Common myeloid progenitor, CD34-positive (primary cell): ENCODE measurements at regions of chr5 and their contacts with region 1.

Region 1: GRCh38 chr5:671459-672328 is 21.5 kb downstream of the TPPP start:
- DNase-seq: peak; percentile 68 to 78 (median 77)
- H3K4me3 ChIP-seq: peak overlapping the region in 1 of 7 experiments; percentile 37
- H3K27ac ChIP-seq: peak overlapping the region; percentile 70 to 88
- H3K4me1 ChIP-seq: peaks cover 0 to 32% (median 24%) of the 10 kb centered on the region in 4 experiments
- H3K27me3 ChIP-seq: peaks cover 0 to 53% (median 5%) of the 10 kb centered on the region in 5 experiments

Region 2: GRCh38 chr5:553887-554286 is 117.8 kb before region 1 on chr5:
- CTCF ChIA-PET with region 1: no interaction called
- POLR2A ChIA-PET with region 1: no interaction called
- DNase-seq: no peak
- H3K4me3 ChIP-seq: no peak overlapping the region
- H3K27ac ChIP-seq: no peak overlapping the region
- H3K4me1 ChIP-seq: no peaks in the 10 kb centered on the region
- H3K27me3 ChIP-seq: peaks cover 0 to 20% (median 0%) of the 10 kb centered on the region in 5 experiments

Region 3: DNA sequence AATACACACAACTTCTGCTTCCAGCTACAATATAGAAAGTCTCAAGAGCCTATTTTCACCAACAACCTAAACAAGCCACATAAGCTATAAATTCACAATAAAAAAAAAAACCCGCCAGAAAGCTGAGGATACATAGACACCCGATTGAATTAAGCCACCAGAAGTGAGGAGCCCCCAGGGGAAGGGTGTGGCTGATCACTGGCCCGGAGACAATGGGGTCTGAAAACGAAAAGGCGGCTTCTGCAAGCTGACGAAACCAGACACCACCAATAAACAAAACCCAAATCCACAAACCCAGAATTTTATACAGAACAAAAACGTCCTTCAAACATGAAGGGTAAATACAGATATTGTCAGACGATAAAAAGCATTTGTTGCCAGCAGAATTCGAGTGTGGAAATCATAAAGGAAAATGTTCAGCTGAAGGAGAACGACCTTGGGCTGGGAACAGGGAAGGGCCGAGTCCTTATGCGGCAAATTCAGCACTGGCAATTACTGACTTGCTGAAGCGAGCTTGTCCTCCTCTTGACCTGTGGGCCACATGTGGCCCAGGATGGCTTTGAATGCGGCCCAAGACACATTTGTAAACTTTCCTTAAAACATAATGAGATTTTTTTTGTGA is 99.2 kb before region 1 on chr5:
- CTCF ChIA-PET with region 1: no interaction called
- POLR2A ChIA-PET with region 1: no interaction called
- DNase-seq: no peak
- H3K4me3 ChIP-seq: no peak overlapping the region
- H3K27ac ChIP-seq: no peak overlapping the region
- H3K4me1 ChIP-seq: no peaks in the 10 kb centered on the region
- H3K27me3 ChIP-seq: peaks cover 2 to 69% (median 22%) of the 10 kb centered on the region in 5 experiments

Region 4: DNA sequence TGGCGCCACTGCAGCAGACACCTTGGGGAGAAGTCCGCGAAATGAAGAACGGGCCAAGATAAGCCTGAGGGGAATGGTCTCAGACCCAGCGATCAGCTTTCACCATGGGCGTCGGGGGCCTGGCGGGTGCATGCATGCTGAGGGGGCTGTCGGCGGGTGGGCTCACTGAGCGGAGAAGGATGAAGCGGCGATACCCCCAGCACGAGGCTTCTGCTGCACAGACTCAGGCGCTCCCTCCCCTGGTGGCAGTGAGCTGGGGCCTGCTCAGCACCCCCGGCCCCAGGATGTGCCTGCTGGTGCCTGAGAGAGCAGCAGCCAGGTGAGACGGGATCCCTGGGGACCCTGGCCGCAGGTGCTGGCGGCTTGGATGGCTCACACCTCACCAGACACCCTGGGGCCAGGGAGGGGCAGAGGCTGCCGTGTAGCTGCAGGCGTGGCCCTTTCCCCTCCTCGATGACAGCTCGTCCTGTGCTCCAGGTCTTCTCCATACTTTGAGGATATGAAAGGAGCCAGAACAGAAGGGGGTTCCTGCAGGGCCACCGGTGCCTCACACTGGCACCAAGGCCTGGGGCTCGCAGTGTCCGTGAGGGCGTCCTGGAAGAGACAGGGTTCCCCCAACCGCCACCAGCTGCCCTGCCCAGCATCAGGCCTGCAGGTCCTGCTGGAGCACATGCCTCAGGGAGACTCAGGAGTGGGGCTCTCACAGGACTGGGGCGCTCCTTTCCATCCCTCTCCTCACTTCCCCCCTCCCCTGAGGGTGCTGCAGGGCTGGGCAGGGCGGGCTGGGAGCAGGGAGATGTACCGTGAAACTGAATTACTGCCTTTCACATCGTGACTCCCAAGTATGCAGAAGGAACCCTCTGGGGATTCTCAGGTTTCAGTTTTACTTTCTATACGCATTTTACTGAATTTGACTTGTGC is 28.1 kb before region 1 on chr5:
- CTCF ChIA-PET with region 1: no interaction called
- POLR2A ChIA-PET with region 1: no interaction called
- DNase-seq: no peak
- H3K4me3 ChIP-seq: no peak overlapping the region
- H3K27ac ChIP-seq: no peak overlapping the region
- H3K4me1 ChIP-seq: no peaks in the 10 kb centered on the region
- H3K27me3 ChIP-seq: no peaks in the 10 kb centered on the region

Region 5: GRCh38 chr5:657570-657969 is 14.1 kb before region 1 on chr5:
- CTCF ChIA-PET with region 1: interaction called, 13 read pairs
- POLR2A ChIA-PET with region 1: no interaction called
- DNase-seq: no peak
- H3K4me3 ChIP-seq: no peak overlapping the region
- H3K27ac ChIP-seq: no peak overlapping the region
- H3K4me1 ChIP-seq: no peaks in the 10 kb centered on the region
- H3K27me3 ChIP-seq: no peaks in the 10 kb centered on the region

Region 6: DNA sequence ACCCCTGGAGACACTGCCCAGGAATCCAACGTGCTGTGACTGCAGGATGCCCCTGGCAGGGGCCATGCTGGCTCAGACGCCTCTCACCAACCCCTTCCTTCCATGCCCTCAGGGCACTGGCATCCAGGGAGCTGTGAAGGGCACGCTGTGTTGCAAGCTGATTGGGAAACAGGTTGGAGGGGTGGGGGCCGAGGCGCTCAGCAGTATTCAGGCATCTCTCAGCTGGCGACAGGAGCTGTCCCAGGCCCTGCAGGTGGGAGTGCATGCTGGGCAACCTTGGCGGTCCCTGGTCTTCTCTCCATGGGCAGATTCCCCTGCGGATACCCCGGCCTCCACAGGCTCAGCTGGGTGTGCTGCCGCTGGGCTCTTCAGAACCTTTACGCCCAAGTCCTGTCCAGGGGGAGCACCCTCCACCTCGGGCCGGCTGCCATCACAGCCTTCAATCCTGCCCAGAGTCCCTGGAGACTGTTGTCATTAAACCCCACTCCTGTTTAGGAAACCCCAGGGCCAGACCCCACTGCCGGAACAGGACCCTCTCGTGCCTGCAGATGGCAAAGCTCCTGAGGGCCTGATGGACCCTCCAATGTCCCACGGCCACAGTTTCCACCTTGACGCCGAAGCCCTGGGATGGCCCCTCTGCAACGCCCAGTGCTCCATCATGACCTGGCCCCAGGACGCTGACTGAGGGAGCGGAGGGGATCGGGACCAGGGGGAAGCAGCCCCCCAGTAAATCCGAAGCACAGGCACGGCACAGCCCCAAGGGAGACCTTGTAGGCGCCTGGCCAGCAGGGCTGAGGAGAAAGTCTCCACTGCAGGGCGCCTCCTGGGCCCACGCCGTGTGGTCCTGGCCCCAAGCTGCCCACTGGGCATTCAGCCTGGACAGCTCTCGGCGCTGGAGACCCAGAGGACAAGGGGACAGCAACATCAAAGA is 12.1 kb after region 1 on chr5:
- CTCF ChIA-PET with region 1: no interaction called
- POLR2A ChIA-PET with region 1: no interaction called
- DNase-seq: no peak
- H3K4me3 ChIP-seq: no peak overlapping the region
- H3K27ac ChIP-seq: no peak overlapping the region
- H3K4me1 ChIP-seq: no peaks in the 10 kb centered on the region
- H3K27me3 ChIP-seq: peaks cover 0 to 14% (median 0%) of the 10 kb centered on the region in 5 experiments

Region 7: DNA sequence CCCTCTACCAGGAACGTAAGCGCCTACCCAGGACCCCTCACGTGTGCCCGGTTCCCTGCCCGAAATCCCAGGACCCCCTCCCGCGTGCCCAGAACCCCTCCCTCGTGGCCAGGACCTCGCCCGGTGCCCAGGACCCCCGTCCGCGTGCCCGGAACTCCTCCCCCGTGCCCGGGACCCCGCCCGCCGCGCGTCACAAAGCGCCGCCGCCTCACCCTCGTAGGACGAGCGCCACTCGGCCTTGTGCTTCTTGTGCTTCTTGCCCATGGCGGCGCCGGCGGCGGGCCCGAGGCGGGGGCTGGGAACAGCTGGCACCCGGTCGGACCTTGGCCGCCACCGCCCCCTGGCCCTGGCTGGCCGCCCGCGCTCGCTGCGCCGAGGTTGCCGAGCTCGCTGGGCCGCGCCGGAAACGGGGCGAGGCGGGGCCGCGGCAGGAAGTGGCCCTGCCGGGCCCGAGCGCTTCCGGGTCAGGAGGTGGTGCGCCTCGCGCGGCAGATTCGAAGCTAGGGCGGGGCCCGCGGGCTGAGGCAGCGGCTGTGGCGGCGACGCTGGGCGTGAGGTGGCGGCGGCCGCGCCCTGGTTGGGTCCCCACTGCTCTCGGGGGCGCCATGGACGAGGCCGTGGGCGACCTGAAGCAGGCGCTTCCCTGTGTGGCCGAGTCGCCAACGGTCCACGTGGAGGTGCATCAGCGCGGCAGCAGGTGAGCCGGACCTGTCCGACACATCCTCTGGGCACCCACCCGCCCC is 220.9 kb after region 1 on chr5 and contains the starts of genes BRD9 and TRIP13:
- CTCF ChIA-PET with region 1: interaction called, 67 read pairs
- POLR2A ChIA-PET with region 1: interaction called, 3 read pairs
- DNase-seq: peak; percentile 77 to 90 (median 85)
- H3K4me3 ChIP-seq: peak within 1 kb of the TSS; percentile 62 to 87 (median 80)
- H3K27ac ChIP-seq: peak within 1 kb of the TSS; percentile 78 to 88
- H3K4me1 ChIP-seq: peaks cover 0 to 26% (median 23%) of the 10 kb centered on the region in 4 experiments
- H3K27me3 ChIP-seq: no peaks in the 10 kb centered on the region

Region 8: DNA sequence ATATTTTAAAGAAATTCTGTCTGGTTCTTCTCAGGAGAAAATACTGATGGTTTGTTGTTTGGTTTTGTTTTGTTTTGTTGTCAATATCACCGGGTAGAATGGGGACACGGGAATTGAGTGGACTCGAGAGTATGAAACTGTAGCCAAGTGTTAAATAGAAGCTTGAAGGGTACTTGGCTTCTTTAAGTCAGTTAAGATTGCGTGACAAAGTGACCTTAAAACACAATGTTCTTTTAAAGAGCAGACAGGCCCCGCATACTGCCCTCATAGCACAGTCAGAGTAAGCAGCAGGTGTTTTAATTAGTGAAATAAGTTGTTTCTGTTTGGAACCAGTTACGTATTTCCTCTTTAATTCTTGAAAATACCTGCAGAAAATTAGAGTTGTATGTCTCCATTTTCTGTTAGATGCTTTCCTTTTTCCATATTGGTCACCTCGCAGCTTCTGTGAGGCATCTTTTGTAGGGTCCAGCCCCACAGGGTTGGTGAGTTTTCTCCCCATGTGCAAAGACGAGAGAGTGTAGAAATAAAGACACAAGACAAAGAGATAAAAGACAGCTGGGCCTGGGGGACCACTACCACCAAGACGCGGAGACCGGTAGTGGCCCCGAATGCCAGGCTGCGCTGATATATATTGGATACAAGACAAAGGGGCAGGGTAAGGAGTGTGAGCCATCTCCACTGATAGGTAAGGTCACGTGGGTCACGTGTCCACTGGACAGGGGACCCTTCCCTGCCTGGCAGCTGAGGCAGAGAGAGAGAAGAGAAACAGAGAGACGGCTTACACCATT is 230.6 kb after region 1 on chr5:
- CTCF ChIA-PET with region 1: interaction called, 117 read pairs
- POLR2A ChIA-PET with region 1: no interaction called
- DNase-seq: no peak
- H3K4me3 ChIP-seq: no peak overlapping the region
- H3K27ac ChIP-seq: no peak overlapping the region
- H3K4me1 ChIP-seq: no peaks in the 10 kb centered on the region
- H3K27me3 ChIP-seq: no peaks in the 10 kb centered on the region